Activated B cell treated with CpG ODN at 0.5 μM for 24 hours (primary cell): ENCODE measurements at regions of chr17 and their contacts with region 1.

Region 1: GRCh38 chr17:49191917-49192741 is 18.2 kb downstream of the GNGT2 start:
- DNase-seq: peak; percentile 96
- ATAC-seq: peak; percentile 40
- H3K4me3 Mint-ChIP-seq: peak overlapping the region; percentile 92
- H3K27ac Mint-ChIP-seq: peak overlapping the region; percentile 97
- H3K4me1 Mint-ChIP-seq: peaks cover 38% of the 10 kb centered on the region
- H3K27me3 Mint-ChIP-seq: peaks cover 2% of the 10 kb centered on the region
- CTCF ChIP-seq: no peak

Region 2: GRCh38 chr17:48892940-48893645 is 299.0 kb before region 1 on chr17:
- CTCF ChIA-PET with region 1: no interaction called
- POLR2A ChIA-PET with region 1: interaction called, 4 read pairs
- intact Hi-C with region 1: loop called (anchors 2 kb)
- DNase-seq: no peak
- ATAC-seq: no peak
- H3K4me3 Mint-ChIP-seq: peak overlapping the region; percentile 94
- H3K27ac Mint-ChIP-seq: peak overlapping the region; percentile 94
- H3K4me1 Mint-ChIP-seq: peaks cover 34% of the 10 kb centered on the region
- H3K27me3 Mint-ChIP-seq: no peaks in the 10 kb centered on the region
- CTCF ChIP-seq: no peak

Region 3: GRCh38 chr17:49217651-49218413 is 25.7 kb after region 1 on chr17:
- CTCF ChIA-PET with region 1: interaction called, 91 read pairs
- POLR2A ChIA-PET with region 1: interaction called, 259 read pairs
- intact Hi-C with region 1: loop called (anchors 1 kb)
- DNase-seq: no peak
- ATAC-seq: peak; percentile 37
- H3K4me3 Mint-ChIP-seq: peak overlapping the region; percentile 67
- H3K27ac Mint-ChIP-seq: peak overlapping the region; percentile 94
- H3K4me1 Mint-ChIP-seq: peaks cover 70% of the 10 kb centered on the region
- H3K27me3 Mint-ChIP-seq: no peaks in the 10 kb centered on the region
- CTCF ChIP-seq: no peak

Region 4: DNA sequence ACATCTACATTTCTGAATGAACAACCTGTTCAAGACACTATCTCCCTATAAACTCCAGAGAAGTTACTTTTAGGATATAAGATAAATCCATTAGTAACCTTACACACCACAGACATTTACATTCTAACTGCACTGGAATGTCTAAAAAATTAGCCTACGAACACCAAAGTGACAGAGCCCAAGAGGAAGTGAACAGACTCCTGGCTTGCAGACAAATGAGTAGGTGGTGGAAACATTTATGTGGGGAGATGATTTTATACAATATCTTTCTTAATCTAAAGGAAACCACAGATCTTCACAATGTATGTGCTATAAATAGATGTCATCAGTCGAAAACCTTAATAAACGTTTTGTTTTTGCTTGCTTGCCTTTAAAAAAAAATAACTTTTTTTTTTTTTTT is 151.1 kb after region 1 on chr17:
- CTCF ChIA-PET with region 1: no interaction called
- POLR2A ChIA-PET with region 1: no interaction called
- intact Hi-C with region 1: loop called (anchors 5 kb)
- DNase-seq: no peak
- ATAC-seq: peak; percentile 30
- H3K4me3 Mint-ChIP-seq: peak overlapping the region; percentile 72
- H3K27ac Mint-ChIP-seq: peak overlapping the region; percentile 89
- H3K4me1 Mint-ChIP-seq: peaks cover 65% of the 10 kb centered on the region
- H3K27me3 Mint-ChIP-seq: no peaks in the 10 kb centered on the region
- CTCF ChIP-seq: no peak

Region 5: GRCh38 chr17:49739641-49740271 is 547.6 kb after region 1 on chr17:
- CTCF ChIA-PET with region 1: no interaction called
- POLR2A ChIA-PET with region 1: no interaction called
- intact Hi-C with region 1: loop called (anchors 10 kb)
- DNase-seq: peak; percentile 75
- ATAC-seq: peak; percentile 91
- H3K4me3 Mint-ChIP-seq: peak overlapping the region; percentile 81
- H3K27ac Mint-ChIP-seq: peak overlapping the region; percentile 99
- H3K4me1 Mint-ChIP-seq: peaks cover 87% of the 10 kb centered on the region
- H3K27me3 Mint-ChIP-seq: no peaks in the 10 kb centered on the region
- CTCF ChIP-seq: no peak